Right cardiac atrium (tissue), 5 donors: ENCODE measurements at regions of chr17 and their contacts with region 1.

Region 1: DNA sequence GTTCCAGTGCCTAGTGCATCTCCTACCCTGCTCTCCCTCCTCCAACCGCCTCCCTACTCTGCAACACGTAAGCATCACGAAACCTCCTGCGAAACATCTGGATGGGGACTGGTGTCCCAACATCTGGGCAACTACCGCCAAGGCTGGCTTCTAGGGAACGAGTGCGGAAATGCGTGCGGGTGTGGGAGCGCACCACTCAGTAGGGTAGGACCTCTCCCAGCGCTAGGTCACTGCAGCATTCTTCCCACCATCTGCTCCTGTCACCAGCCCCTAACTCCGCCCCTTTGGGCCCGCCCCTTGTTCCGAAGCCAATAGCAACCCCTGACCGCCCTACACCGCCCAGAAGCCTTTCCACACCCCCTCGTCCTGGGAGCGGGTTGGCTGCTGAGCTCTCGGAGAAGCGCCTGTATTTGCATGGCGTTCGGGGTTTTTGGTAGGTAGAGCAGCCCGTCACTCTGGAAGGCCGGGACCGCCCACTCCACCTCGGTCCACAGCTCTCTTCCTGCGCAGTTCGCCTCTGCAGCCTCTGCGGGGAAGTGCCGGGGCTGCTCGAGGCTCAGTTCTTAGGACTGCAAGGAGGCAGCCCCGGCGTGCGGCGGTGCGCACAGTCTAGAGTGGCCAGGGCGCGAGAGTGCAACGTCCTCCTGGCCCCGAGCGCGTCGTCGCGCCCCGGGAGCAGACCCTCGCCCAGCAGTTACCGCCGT is at the start of gene HS3ST3B1:
- DNase-seq: peak; percentile 98 to 99 (median 98)
- ATAC-seq: peak; percentile 94 to 96
- H3K4me3 ChIP-seq: peak within 1 kb of the TSS; percentile 41
- H3K27ac ChIP-seq: peak within 1 kb of the TSS; percentile 20
- H3K4me1 ChIP-seq: no peaks in the 10 kb centered on the region
- H3K27me3 ChIP-seq: no peaks in the 10 kb centered on the region
- total RNA-seq, gene HS3ST3B1: 1.1 to 2.6 (median 2.1) TPM

Region 2: GRCh38 chr17:13337864-13338371 is 962.8 kb before region 1 on chr17:
- intact Hi-C with region 1: loop called in 2 of 4 experiments (anchors 10 kb)
- DNase-seq: no peak
- ATAC-seq: no peak
- H3K4me3 ChIP-seq: peak overlapping the region; percentile 59
- H3K27ac ChIP-seq: no peak overlapping the region
- H3K4me1 ChIP-seq: no peaks in the 10 kb centered on the region
- H3K27me3 ChIP-seq: no peaks in the 10 kb centered on the region